Heart right ventricle (tissue), 16 donors: ENCODE measurements at regions of chr10 and their contacts with region 1.

Region 1: GRCh38 chr10:87878664-87879459 is 15.4 kb downstream of the PTEN start:
- DNase-seq: no peak
- ATAC-seq: no peak
- H3K4me3 ChIP-seq: no peak overlapping the region
- H3K27ac ChIP-seq: no peak overlapping the region
- H3K4me1 ChIP-seq: peaks cover 5 to 87% (median 76%) of the 10 kb centered on the region in 9 donors
- H3K27me3 ChIP-seq: no peaks in the 10 kb centered on the region
- CTCF ChIP-seq: no peak

Region 2: DNA sequence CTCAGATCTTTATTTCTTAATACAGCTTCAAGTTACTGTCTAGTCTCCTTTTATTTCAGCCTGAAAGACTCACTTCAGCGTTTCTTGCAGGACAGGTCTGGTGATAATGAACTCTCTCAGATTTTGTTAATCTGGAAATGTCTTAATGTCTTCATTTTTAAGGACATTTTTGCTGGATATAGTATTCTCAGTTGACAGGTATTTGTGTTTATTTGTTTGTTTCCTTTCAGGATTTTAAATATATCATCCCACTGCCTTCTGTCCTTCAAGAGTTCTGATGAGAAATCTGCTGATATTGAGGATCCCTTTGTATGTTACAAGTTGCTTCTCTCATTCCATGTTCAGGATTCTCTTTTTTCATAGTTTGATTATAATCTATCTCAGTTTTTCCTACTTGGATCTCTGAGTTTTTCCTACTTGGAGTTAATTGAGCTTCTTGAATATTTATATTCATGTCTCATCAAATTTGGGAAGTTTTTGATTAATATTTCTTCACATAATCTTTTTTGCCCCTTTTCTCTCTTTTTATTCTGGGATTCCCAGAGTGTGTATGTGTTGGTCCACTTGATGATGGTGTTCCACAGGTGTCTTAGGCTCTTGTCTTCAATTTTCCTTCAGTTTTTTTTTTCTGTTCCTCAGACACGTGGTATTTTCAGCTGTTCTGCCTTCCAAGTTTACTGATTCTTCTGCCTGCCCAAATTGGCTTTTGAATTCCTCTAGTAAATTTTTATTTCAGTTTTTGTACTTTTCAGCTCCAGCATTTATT is 34.5 kb after region 1 on chr10:
- intact Hi-C with region 1: loop called in 1 of 10 experiments (anchors 5 kb)
- DNase-seq: no peak
- ATAC-seq: no peak
- H3K4me3 ChIP-seq: no peak overlapping the region
- H3K27ac ChIP-seq: no peak overlapping the region
- H3K4me1 ChIP-seq: peaks cover 0 to 36% (median 32%) of the 10 kb centered on the region in 9 donors
- H3K27me3 ChIP-seq: no peaks in the 10 kb centered on the region
- CTCF ChIP-seq: no peak

Region 3: DNA sequence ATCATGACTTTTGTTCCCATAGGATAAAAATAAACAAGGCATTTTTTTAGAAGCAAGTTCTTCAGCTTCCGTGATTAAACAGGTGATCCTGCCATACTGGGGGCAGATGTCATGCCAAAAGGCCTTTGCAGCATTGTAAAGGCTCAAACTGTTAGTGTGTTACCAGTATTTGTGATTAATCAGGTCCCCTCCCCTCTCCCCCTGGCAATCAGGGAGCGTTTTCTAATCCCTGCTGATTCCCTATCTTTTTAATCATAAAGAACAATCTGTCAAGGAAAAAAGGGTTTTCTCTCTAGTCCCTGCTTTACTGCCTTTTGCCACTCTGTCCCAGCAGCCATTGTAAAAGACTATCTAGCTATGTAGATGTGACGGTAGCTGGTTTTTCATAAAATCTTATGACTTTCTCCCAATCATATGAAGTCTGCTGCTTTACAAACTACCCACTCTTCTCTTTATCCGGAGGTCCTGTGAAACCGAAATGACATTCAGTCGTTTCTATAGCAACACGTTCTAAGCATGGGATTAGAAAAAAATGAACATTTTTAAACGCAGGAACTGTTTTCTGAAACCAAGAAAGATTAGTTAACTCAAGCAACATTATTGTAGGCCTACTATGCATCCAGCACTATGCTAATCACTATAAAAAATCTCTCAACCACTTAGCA is 493.3 kb after region 1 on chr10:
- intact Hi-C with region 1: no loop called
- DNase-seq: no peak
- ATAC-seq: no peak
- H3K4me3 ChIP-seq: no peak overlapping the region
- H3K27ac ChIP-seq: no peak overlapping the region
- H3K4me1 ChIP-seq: peaks cover 0 to 3% (median 0%) of the 10 kb centered on the region in 9 donors
- H3K27me3 ChIP-seq: no peaks in the 10 kb centered on the region
- CTCF ChIP-seq: no peak